T-cell (primary cell): ENCODE measurements at regions of chr11 and their contacts with region 1.

Region 1: DNA sequence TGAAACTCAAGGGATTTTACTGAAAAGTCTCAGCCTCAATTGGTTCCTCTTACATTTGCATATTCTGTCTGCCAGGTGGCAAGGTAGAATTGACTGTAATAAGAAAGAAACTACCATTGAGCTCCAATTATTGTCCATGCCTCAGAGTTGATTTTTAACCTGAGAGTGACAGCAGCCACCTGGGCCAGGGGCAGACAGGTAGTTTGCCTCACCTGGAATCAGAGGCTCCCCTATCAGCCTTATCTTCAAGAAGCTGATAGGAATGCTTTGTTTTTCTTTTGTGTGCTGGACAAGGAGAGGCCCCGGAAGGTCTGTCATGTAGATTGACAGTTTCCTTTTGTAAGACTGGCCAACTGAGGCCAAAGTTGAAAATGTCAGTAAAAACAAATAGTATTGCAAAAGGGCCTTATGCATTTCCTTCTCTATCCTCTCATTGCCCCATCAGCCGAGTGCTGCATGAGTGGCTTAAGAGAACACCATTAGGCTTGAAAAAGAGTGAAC is 34.1 kb downstream of the CD44 start:
- DNase-seq: no peak
- ATAC-seq: no peak
- H3K4me3 ChIP-seq: no peak overlapping the region
- H3K4me3 Mint-ChIP-seq: peak overlapping the region; percentile 55 to 69 (median 59)
- H3K27ac ChIP-seq: peak overlapping the region; percentile 99
- H3K27ac Mint-ChIP-seq: peak overlapping the region; percentile 100
- H3K4me1 ChIP-seq: peaks cover 76 to 95% of the 10 kb centered on the region in 2 experiments
- H3K4me1 Mint-ChIP-seq: peaks cover 95 to 97% (median 96%) of the 10 kb centered on the region in 3 donors
- H3K27me3 ChIP-seq: no peaks in the 10 kb centered on the region
- H3K27me3 Mint-ChIP-seq: no peaks in the 10 kb centered on the region

Region 2: DNA sequence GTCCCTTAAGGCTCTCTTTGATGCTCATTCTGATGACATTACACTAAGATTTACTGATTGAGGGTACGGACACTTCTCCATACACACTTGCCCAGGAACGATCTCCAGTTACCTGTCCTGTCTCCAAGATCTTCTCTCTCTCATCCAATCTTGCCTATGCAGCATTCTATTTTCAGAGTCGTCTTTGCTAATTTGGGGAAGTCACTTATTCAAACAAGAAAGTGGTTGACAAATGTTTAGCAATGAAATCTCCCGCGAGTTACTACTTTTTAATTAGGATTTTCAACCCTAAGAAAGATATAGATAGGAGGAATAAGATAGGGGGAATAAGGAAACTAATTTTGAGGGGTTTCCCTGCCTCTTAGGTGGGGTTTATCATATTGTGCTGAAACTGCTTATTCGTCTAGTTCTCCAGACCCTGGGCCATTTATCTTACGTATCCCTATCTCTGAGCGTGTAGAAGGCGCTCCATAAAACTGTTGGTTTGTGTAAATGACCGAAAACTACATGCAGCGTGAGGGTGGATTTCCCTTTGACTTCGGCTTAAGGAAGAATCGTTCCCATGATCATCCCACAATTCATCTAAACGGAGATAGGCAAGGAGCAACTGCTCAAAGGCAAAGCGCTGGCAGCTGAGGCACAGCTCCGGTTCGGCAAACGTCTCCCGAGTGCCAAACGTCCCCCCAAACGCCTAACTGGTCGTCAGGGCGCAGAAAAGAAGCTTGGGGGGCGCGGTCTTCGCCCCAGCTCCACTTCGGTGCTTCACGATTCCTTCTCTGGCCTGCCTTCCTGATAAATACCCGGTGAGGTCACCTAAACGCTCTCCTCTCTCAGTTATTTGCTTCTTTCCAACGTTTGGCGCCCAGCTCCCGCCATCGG is 257.7 kb before region 1 on chr11:
- CTCF ChIA-PET with region 1: no interaction called
- POLR2A ChIA-PET with region 1: interaction called in 1 of 2 experiments, 11 read pairs
- DNase-seq: peak in 2 of 35 experiments; percentile 8 to 18
- ATAC-seq: peak; percentile 1 to 10 (median 6)
- H3K4me3 ChIP-seq: peak overlapping the region; percentile 78 to 95
- H3K4me3 Mint-ChIP-seq: peak overlapping the region; percentile 94 to 97 (median 96)
- H3K27ac ChIP-seq: peak overlapping the region; percentile 91
- H3K27ac Mint-ChIP-seq: peak overlapping the region; percentile 93 to 97
- H3K4me1 ChIP-seq: peaks cover 8 to 25% of the 10 kb centered on the region in 2 experiments
- H3K4me1 Mint-ChIP-seq: peaks cover 47 to 65% (median 49%) of the 10 kb centered on the region in 3 donors
- H3K27me3 ChIP-seq: no peaks in the 10 kb centered on the region
- H3K27me3 Mint-ChIP-seq: no peaks in the 10 kb centered on the region

Region 3: GRCh38 chr11:35197292-35197691 is 24.2 kb after region 1 on chr11:
- CTCF ChIA-PET with region 1: interaction called in 1 of 2 experiments, 3 read pairs
- POLR2A ChIA-PET with region 1: interaction called, 4 to 13 read pairs
- DNase-seq: no peak
- ATAC-seq: no peak
- H3K4me3 ChIP-seq: no peak overlapping the region
- H3K4me3 Mint-ChIP-seq: no peak overlapping the region
- H3K27ac ChIP-seq: no peak overlapping the region
- H3K27ac Mint-ChIP-seq: peak overlapping the region in 1 of 2 donors; percentile 63
- H3K4me1 ChIP-seq: peaks cover 10 to 15% of the 10 kb centered on the region in 2 experiments
- H3K4me1 Mint-ChIP-seq: peaks cover 89 to 92% (median 92%) of the 10 kb centered on the region in 3 donors
- H3K27me3 ChIP-seq: no peaks in the 10 kb centered on the region
- H3K27me3 Mint-ChIP-seq: no peaks in the 10 kb centered on the region